MCF 10A (cell line): ENCODE measurements at regions of chr1 and their contacts with region 1.

Region 1: GRCh38 chr1:205183676-205184335 is 27.7 kb downstream of the DSTYK start:
- DNase-seq: no peak
- H3K4me3 Mint-ChIP-seq: no peak overlapping the region
- H3K27ac Mint-ChIP-seq: peak overlapping the region; percentile 29
- H3K4me1 Mint-ChIP-seq: peaks cover 14% of the 10 kb centered on the region
- H3K27me3 Mint-ChIP-seq: no peaks in the 10 kb centered on the region
- CTCF ChIP-seq: no peak

Region 2: GRCh38 chr1:203968728-203969127 is 1215.1 kb before region 1 on chr1:
- CTCF ChIA-PET with region 1: no interaction called
- POLR2A ChIA-PET with region 1: no interaction called
- intact Hi-C with region 1: no loop called
- DNase-seq: peak; percentile 16
- H3K4me3 Mint-ChIP-seq: no peak overlapping the region
- H3K27ac Mint-ChIP-seq: no peak overlapping the region
- H3K4me1 Mint-ChIP-seq: no peaks in the 10 kb centered on the region
- H3K27me3 Mint-ChIP-seq: no peaks in the 10 kb centered on the region
- CTCF ChIP-seq: no peak

Region 3: DNA sequence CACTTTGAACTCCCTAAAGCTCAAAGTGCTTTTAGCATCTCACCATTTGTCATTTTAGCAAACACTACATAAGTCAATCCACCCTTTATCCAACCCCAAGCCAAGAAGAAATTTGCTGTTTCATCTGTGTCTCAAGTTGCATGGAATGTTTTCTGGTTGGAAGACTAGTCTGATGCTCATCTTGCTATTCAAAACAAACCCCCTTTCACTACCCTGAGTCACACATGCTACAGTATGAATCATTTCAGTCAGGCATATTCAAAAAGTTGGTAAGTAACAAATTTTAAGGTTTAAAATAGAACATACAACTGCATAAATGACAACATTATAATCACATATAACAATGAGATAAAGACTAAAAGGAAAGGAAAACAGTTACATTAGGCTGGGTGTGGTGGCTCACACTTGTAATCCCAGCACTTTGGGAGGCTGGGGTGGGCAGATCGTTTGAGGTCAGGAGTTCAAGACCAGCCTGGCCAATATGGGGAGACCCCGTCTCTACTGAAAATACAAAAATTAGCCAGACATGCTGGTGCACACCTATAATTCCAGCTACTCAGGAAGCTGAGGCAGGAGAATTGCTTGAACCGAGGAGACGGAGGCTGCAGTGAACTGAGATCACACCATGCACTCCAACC is 11.0 kb before region 1 on chr1:
- CTCF ChIA-PET with region 1: interaction called, 10 read pairs
- POLR2A ChIA-PET with region 1: interaction called, 3 read pairs
- intact Hi-C with region 1: no loop called
- DNase-seq: peak; percentile 93
- H3K4me3 Mint-ChIP-seq: no peak overlapping the region
- H3K27ac Mint-ChIP-seq: peak overlapping the region; percentile 95
- H3K4me1 Mint-ChIP-seq: peaks cover 15% of the 10 kb centered on the region
- H3K27me3 Mint-ChIP-seq: no peaks in the 10 kb centered on the region
- CTCF ChIP-seq: no peak

Region 4: DNA sequence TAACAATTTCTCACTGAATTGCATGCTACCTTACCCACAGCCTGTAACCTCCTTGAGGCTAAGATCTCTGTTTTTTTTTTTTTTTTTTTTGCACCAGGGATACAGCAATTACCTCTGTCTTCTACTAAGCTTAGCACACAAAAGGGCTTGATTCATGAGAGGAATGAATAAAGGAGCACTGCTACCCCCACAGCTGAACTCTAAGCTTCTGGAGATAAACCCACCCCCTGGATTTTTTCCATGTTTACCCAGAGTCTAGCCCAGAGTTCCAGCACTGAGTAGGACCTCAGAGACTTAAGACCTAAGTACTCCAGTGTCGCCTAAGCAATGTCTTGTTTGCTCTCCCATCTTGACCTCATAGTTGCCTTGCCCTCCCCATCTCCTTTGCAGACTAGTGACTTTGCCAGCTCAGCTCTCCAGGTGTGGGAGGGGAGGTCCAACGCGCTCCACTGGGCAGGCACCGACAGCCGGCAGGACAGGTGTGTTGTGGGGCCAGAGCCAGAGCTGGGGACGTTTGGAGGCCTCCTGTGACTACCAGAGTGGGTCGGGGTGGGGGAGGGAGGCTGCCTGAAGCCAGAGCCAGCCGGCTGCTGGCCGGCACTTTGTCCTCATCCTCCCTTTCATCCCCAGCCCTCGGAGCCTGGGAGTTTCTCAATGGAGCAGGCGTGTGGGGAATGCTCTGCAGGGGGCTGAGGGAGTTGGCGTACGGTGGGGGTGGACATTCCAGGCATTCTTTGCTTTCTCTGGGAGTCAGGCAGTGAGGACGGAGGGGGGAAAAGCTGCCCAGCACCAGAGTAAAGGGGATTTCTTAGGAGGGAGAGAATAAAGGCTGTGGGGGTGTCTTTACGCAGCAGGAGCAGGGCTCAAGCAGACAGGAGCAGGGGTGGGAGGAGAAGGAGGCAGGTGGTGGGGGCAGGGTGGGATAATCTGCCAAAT is 117.3 kb after region 1 on chr1:
- CTCF ChIA-PET with region 1: no interaction called
- POLR2A ChIA-PET with region 1: no interaction called
- intact Hi-C with region 1: no loop called
- DNase-seq: peak; percentile 91
- H3K4me3 Mint-ChIP-seq: no peak overlapping the region
- H3K27ac Mint-ChIP-seq: peak overlapping the region; percentile 23
- H3K4me1 Mint-ChIP-seq: peaks cover 48% of the 10 kb centered on the region
- H3K27me3 Mint-ChIP-seq: no peaks in the 10 kb centered on the region
- CTCF ChIP-seq: no peak